SK-N-SH (cell line): ENCODE measurements at regions of chr11 and their contacts with region 1.

Region 1: DNA sequence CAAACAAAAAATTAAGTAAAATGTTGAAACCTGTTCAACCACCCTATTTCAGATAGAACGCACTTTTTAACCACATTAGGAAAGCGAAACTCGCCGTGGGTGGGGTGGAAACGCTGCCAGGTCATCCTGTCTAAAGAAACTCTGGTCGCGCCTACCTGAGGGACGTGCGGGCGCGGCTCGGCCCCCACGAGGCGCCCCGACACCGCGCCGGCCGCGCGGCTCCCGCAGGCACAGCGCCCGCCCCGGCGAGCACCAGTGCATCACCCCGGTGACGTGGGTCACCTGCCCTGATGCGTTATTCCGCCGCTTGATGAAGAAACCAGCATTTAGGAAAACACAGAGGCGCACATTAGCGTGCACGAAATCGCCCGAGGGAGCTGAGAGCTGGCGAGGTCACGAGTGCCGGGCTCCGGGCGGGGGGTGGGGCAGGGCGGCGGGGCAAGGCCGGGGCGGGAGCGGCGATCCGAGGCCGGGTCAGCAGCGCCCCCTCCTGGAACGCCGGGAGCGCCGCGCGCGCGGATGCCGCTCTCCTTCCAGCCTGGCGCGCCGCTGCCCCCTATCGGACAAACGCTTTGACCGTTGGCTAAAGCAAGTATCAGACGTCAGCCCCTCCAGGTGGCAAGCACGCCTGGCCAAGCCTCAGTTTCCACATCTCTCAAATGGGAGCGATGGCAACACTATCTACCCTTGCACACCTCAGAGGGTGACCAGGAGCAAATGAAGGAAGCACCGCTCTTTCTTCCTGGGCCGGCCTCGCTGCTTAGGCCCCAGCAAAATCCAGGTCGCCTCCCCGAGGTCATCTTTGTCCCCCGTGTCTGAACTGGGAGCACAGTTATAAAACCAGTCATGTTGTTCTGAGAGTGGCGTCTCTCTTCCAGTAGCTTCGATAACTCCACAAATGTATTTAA is 15.7 kb upstream of the SNX32 start:
- DNase-seq: peak; percentile 99
- H3K4me3 ChIP-seq: peak overlapping the region; percentile 62 to 75
- H3K27ac ChIP-seq: peak overlapping the region in 1 of 2 experiments; percentile 62; a peak in 1 of 4 replicates
- H3K4me1 ChIP-seq: peaks cover 0 to 3% of the 10 kb centered on the region in 2 experiments; a peak in 1 of 4 replicates
- H3K27me3 ChIP-seq: no peaks in the 10 kb centered on the region
- CTCF ChIP-seq: peak; percentile 91
- EP300 ChIP-seq: no peak
- RAD21 ChIP-seq: peak; percentile 89

Region 2: DNA sequence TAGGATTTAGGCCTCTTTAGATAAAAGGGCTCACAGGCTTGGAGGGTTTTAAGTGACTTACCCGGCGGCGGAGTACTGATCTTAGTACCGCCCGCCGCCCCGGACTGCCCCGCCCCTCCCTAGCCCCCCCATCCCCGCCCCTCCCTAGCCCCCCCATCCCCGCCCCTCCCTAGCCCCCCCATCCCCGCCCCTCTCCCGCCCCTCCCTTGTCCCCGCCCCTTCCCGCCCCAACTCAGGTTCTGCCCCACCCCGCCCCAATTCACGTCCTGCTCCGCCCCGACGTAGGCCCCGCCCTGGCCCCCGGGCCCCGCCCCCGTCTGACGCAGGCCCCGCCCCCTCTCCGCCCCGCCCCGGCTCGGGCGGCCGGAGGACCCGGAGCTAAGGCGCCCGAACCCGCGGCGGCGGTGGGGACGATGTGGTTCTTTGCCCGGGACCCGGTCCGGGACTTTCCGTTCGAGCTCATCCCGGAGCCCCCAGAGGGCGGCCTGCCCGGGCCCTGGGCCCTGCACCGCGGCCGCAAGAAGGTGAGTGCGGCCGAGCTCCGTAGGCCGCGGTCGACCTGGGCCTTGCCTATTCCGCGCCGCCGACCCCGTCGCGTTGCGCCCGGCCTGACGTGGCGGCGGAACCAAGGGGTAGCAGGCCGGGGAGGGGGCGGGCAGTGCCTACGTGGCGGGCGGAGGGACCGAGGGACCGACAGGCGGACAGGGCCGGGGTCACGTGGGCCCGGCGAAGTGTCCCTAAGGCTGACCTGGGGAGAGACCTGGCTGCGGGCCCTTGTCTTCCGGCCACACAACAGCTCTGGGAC is 293.1 kb before region 1 on chr11 and contains the start of gene SCYL1:
- CTCF ChIA-PET with region 1: no interaction called
- POLR2A ChIA-PET with region 1: no interaction called
- DNase-seq: peak; percentile 99
- H3K4me3 ChIP-seq: peak within 1 kb of the TSS; percentile 78 to 81
- H3K27ac ChIP-seq: peak within 1 kb of the TSS; percentile 56 to 62; a peak in 2 of 4 replicates
- H3K4me1 ChIP-seq: peaks cover 5 to 18% of the 10 kb centered on the region in 2 experiments; a peak in 3 of 4 replicates
- H3K27me3 ChIP-seq: no peaks in the 10 kb centered on the region
- CTCF ChIP-seq: no peak
- EP300 ChIP-seq: no peak; a peak in 1 of 4 replicates
- RAD21 ChIP-seq: no peak
- polyA plus RNA-seq, gene SCYL1: 76.7 and 79.9 TPM in 2 replicates

Region 3: DNA sequence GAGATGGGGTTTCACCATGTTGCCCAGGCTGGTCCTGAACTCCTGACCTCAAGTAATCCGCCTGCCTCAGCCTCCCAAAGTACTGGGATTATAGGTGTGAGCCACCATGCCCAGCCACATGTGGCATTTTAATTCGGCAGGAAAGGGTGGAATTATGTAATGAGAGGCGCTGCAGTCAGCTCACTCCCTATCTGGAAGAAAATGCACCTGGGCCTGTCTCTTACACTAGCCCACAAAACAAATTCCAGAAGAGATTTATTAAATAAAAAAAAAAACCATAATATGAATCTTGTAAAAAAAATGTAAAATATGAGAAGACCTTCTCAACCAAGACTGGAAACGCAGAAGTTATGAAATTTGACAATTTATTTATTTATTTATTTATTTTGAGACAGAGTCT is 114.2 kb before region 1 on chr11:
- CTCF ChIA-PET with region 1: interaction called, 30 read pairs
- POLR2A ChIA-PET with region 1: no interaction called
- DNase-seq: no peak
- H3K4me3 ChIP-seq: no peak overlapping the region
- H3K27ac ChIP-seq: no peak overlapping the region
- H3K4me1 ChIP-seq: no peaks in the 10 kb centered on the region; a peak in 1 of 4 replicates
- H3K27me3 ChIP-seq: peaks cover 25% of the 10 kb centered on the region; the same call in 1 of the 2 replicates
- CTCF ChIP-seq: no peak
- EP300 ChIP-seq: no peak
- RAD21 ChIP-seq: no peak

Region 4: GRCh38 chr11:65743928-65744698 is 74.0 kb before region 1 on chr11:
- CTCF ChIA-PET with region 1: interaction called, 35 read pairs
- POLR2A ChIA-PET with region 1: no interaction called
- DNase-seq: peak; percentile 73
- H3K4me3 ChIP-seq: no peak overlapping the region
- H3K27ac ChIP-seq: no peak overlapping the region
- H3K4me1 ChIP-seq: peaks cover 0 to 10% of the 10 kb centered on the region in 2 experiments; a peak in 1 of 4 replicates
- H3K27me3 ChIP-seq: peaks cover 10% of the 10 kb centered on the region; the same call in 1 of the 2 replicates
- CTCF ChIP-seq: peak; percentile 49
- EP300 ChIP-seq: no peak
- RAD21 ChIP-seq: peak; percentile 69

Region 5: GRCh38 chr11:65773784-65774411 is 44.2 kb before region 1 on chr11:
- CTCF ChIA-PET with region 1: interaction called, 42 read pairs
- POLR2A ChIA-PET with region 1: no interaction called
- DNase-seq: no peak
- H3K4me3 ChIP-seq: no peak overlapping the region
- H3K27ac ChIP-seq: no peak overlapping the region
- H3K4me1 ChIP-seq: no peaks in the 10 kb centered on the region
- H3K27me3 ChIP-seq: no peaks in the 10 kb centered on the region
- CTCF ChIP-seq: no peak
- EP300 ChIP-seq: no peak
- RAD21 ChIP-seq: no peak

Region 6: GRCh38 chr11:65791691-65792213 is 26.3 kb before region 1 on chr11:
- CTCF ChIA-PET with region 1: interaction called, 43 read pairs
- POLR2A ChIA-PET with region 1: no interaction called
- DNase-seq: peak; percentile 33
- H3K4me3 ChIP-seq: no peak overlapping the region
- H3K27ac ChIP-seq: no peak overlapping the region
- H3K4me1 ChIP-seq: no peaks in the 10 kb centered on the region; a peak in 1 of 4 replicates
- H3K27me3 ChIP-seq: peaks cover 27% of the 10 kb centered on the region
- CTCF ChIP-seq: no peak
- EP300 ChIP-seq: no peak
- RAD21 ChIP-seq: no peak

Region 7: GRCh38 chr11:65833297-65834030 is 15.4 kb after region 1 on chr11 and contains the start of gene SNX32:
- CTCF ChIA-PET with region 1: interaction called, 33 read pairs
- POLR2A ChIA-PET with region 1: no interaction called
- DNase-seq: peak; percentile 99
- H3K4me3 ChIP-seq: peak within 1 kb of the TSS; percentile 28 to 73
- H3K27ac ChIP-seq: peak within 1 kb of the TSS in 1 of 2 experiments; percentile 64; a peak in 1 of 4 replicates
- H3K4me1 ChIP-seq: peaks cover 0 to 13% of the 10 kb centered on the region in 2 experiments; a peak in 1 of 4 replicates
- H3K27me3 ChIP-seq: no peaks in the 10 kb centered on the region
- CTCF ChIP-seq: no peak
- EP300 ChIP-seq: no peak
- RAD21 ChIP-seq: no peak
- polyA plus RNA-seq, gene SNX32: 0.81 and 1.0 TPM in 2 replicates

Region 8: DNA sequence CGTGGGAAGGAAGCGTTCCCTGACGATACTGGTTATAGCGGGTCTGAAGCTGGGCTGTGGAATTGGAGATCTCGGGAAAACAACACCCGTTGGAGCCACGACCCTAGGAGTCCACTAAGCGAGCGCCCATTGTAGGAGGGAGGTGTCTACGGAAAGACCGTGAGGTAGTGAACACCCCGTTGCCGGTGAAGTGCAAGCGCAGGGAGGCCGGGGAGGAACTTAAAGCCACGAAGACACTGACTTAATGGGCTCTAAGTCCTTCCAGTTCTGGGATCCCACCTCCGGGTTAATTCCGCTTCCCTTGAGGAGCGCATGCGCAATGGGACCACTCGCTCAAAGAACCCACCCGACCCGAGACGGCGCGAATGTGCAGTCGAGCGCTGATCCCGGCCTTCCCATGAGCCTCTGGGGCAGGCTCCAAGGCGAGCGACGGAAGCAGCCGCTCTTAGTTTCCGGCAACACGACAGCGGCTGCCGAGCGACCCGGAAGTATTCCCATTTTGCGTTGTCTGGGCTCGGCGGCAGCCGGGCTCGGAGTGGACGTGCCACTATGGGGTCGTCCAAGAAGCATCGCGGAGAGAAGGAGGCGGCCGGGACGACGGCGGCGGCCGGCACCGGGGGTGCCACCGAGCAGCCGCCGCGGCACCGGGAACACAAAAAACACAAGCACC is 143.3 kb after region 1 on chr11 and contains the start of gene SART1:
- CTCF ChIA-PET with region 1: no interaction called
- POLR2A ChIA-PET with region 1: no interaction called
- DNase-seq: peak; percentile 99
- H3K4me3 ChIP-seq: peak within 1 kb of the TSS; percentile 97 to 98
- H3K27ac ChIP-seq: peak within 1 kb of the TSS; percentile 91 to 96
- H3K4me1 ChIP-seq: peaks cover 8 to 14% of the 10 kb centered on the region in 2 experiments; a peak in 3 of 4 replicates
- H3K27me3 ChIP-seq: no peaks in the 10 kb centered on the region
- CTCF ChIP-seq: no peak
- EP300 ChIP-seq: no peak
- RAD21 ChIP-seq: no peak
- polyA plus RNA-seq, gene SART1: 39.2 and 73.6 TPM in 2 replicates